OCI-LY7 (cell line): ENCODE measurements at regions of chr4 and their contacts with region 1.

Region 1: GRCh38 chr4:132614682-132615081 is 534.4 kb upstream of the PCDH10 start:
- DNase-seq: peak; percentile 28
- H3K4me3 ChIP-seq: no peak overlapping the region
- H3K27ac ChIP-seq: no peak overlapping the region
- H3K4me1 ChIP-seq: no peaks in the 10 kb centered on the region
- CTCF ChIP-seq: peak; percentile 81

Region 2: GRCh38 chr4:132593717-132594400 is 20.8 kb before region 1 on chr4:
- CTCF ChIA-PET with region 1: no interaction called
- POLR2A ChIA-PET with region 1: interaction called, 10 read pairs
- intact Hi-C with region 1: no loop called
- DNase-seq: no peak
- H3K4me3 ChIP-seq: no peak overlapping the region
- H3K27ac ChIP-seq: no peak overlapping the region
- H3K4me1 ChIP-seq: no peaks in the 10 kb centered on the region
- CTCF ChIP-seq: no peak

Region 3: GRCh38 chr4:132642016-132642817 is 27.5 kb after region 1 on chr4:
- CTCF ChIA-PET with region 1: no interaction called
- POLR2A ChIA-PET with region 1: no interaction called
- intact Hi-C with region 1: no loop called
- DNase-seq: peak; percentile 85
- H3K4me3 ChIP-seq: no peak overlapping the region
- H3K27ac ChIP-seq: no peak overlapping the region
- H3K4me1 ChIP-seq: peaks cover 8% of the 10 kb centered on the region
- CTCF ChIP-seq: peak; percentile 98

Region 4: GRCh38 chr4:133910105-133910504 is 1295.4 kb after region 1 on chr4:
- CTCF ChIA-PET with region 1: no interaction called
- POLR2A ChIA-PET with region 1: no interaction called
- intact Hi-C with region 1: no loop called
- DNase-seq: no peak
- H3K4me3 ChIP-seq: no peak overlapping the region
- H3K27ac ChIP-seq: no peak overlapping the region
- H3K4me1 ChIP-seq: no peaks in the 10 kb centered on the region
- CTCF ChIP-seq: no peak